ENCODE measurements at regions of chr1 and their contacts with region 1.

Region 1: GRCh38 chr1:236868625-236869467 is 73.8 kb downstream of the MTR start:
- DNase-seq: no peak
- H3K4me3 ChIP-seq: no peak overlapping the region
- CTCF ChIP-seq: peak; percentile 85

Region 2: GRCh38 chr1:236608930-236609726 is 259.7 kb before region 1 on chr1:
- CTCF ChIA-PET with region 1: interaction called, 13 read pairs
- POLR2A ChIA-PET with region 1: no interaction called
- DNase-seq: no peak
- H3K4me3 ChIP-seq: no peak overlapping the region
- CTCF ChIP-seq: peak; percentile 33

Region 3: DNA sequence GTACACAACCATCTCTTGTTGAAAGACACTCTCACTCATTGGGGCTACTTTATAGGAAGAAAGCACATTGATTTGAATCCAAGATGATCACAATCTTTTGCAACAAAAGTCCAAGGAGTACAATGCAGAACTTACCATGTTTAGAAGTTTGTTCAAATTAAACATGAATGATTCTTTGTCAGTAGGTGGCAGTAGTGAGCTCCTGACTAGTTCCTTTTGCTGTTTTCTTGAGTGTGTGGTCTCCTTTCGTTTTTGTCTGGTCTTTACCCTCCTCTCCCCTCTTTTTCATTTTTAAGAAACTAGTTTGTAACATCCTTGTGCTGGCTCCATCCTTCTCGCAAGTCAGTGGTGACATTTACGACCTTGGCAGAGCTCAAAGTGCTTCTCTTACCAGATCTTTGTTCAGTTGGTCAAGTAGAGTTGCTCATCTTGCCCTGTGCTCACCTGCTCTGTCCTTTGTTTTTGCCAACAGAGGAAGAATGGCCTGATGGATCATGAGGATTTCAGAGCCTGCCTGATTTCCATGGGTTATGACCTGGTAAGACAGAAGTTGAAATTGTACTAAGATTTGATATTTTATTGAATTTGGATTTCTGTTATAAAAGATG is 109.5 kb before region 1 on chr1:
- CTCF ChIA-PET with region 1: interaction called, 51 read pairs
- POLR2A ChIA-PET with region 1: no interaction called
- DNase-seq: no peak
- H3K4me3 ChIP-seq: no peak overlapping the region
- CTCF ChIP-seq: peak; percentile 56

Region 4: DNA sequence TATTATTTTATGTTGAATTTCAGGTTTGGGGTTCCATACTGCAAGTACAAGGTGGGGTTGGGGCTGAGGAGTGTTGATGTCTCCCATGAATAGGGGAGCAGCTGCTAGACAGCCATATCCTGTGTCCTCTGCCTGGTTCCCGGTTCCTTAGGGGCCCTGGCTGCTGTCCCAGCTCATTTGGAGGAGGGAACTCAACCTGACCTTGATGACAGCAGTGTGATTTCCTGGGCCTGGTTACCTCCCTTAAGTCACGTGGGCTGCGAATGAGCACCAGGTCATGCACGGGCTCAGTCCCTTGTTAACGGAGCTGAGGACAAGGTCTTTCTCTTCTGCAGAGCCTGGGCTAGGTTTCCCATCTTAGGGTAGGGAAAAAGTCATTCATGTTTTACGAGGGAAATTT is 11.4 kb after region 1 on chr1:
- CTCF ChIA-PET with region 1: interaction called, 11 read pairs
- POLR2A ChIA-PET with region 1: no interaction called
- DNase-seq: no peak
- H3K4me3 ChIP-seq: no peak overlapping the region
- CTCF ChIP-seq: no peak

Region 5: GRCh38 chr1:236886199-236886598 is 17.4 kb after region 1 on chr1:
- CTCF ChIA-PET with region 1: interaction called, 10 read pairs
- POLR2A ChIA-PET with region 1: no interaction called
- DNase-seq: no peak
- H3K4me3 ChIP-seq: no peak overlapping the region
- CTCF ChIP-seq: no peak